ENCODE measurements at regions of chr1 and their contacts with region 1.

Region 1: GRCh38 chr1:200488375-200489165 is 78.7 kb upstream of the ZNF281 start:
- DNase-seq: peak; percentile 64
- CTCF ChIP-seq: peak; percentile 51

Region 2: GRCh38 chr1:199691540-199691939 is 797.0 kb before region 1 on chr1:
- in situ Hi-C with region 1: loop called (anchors 10 kb)
- DNase-seq: no peak
- CTCF ChIP-seq: no peak

Region 3: DNA sequence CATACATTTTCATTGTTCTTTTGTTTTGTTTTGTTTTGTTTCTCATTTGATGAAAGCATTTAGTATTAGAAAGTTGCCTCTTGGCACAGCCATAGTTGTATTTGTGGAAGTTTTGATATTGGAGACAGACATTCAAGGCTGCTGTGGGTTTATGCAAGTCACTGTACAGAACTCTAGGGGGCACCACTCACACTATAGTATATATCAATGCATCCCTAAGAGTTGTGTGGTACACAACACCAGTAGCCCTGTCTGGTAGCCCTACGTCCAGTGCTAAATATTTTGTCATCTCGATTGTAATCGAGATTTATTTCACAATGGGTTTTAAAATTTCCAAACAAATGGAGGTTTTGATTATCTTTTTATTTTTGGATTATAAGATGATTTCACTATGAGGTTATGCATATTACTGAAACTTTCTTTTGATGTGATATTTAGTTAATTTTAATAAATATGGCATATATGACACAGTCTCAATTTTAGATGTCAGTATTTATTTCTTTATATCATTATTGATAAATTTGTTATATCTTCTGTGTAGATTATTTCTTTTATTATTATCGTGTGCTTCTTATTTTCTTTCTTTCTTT is 348.8 kb before region 1 on chr1:
- in situ Hi-C with region 1: loop called (anchors 10 kb)
- DNase-seq: peak; percentile 60
- CTCF ChIP-seq: peak; percentile 56

Region 4: DNA sequence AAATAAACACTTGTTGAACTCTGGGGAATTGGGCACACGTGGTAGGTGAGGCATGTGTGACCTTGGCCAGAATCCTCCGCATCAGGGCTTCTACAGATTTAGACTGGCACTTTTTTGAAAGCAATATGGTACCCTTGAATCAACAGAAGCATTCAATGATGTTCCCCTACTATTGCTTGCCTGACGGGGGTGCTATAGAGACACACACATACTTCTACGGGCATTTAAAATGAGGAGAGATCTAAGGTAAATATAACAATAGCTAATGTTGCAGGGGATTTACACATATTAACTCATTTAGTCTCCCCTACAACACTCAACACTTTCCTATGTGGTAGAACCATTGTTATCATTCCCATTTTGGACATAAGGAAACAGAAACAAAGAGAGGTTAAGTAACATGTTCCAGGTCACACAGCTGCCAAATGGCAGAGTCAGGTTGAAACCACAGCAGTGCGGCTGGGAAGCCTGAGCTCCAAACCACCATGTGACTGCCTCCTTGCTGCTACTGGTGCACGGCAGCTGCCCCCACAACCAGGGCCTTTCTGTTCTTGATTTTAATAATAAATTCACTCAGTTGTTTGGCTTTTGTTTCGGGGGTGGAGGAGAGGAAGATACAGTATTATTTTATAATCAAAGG is 226.1 kb before region 1 on chr1:
- in situ Hi-C with region 1: loop called (anchors 10 kb)
- DNase-seq: peak; percentile 47
- CTCF ChIP-seq: no peak

Region 5: GRCh38 chr1:200336111-200336845 is 152.3 kb before region 1 on chr1:
- in situ Hi-C with region 1: no loop called
- DNase-seq: no peak
- CTCF ChIP-seq: no peak

Region 6: GRCh38 chr1:200409761-200410565 is 78.6 kb before region 1 on chr1 and contains the start of gene ZNF281:
- in situ Hi-C with region 1: loop called (anchors 10 kb)
- DNase-seq: peak; percentile 98
- CTCF ChIP-seq: no peak